ENCODE measurements at regions of chr10 and their contacts with region 1.

Region 1: DNA sequence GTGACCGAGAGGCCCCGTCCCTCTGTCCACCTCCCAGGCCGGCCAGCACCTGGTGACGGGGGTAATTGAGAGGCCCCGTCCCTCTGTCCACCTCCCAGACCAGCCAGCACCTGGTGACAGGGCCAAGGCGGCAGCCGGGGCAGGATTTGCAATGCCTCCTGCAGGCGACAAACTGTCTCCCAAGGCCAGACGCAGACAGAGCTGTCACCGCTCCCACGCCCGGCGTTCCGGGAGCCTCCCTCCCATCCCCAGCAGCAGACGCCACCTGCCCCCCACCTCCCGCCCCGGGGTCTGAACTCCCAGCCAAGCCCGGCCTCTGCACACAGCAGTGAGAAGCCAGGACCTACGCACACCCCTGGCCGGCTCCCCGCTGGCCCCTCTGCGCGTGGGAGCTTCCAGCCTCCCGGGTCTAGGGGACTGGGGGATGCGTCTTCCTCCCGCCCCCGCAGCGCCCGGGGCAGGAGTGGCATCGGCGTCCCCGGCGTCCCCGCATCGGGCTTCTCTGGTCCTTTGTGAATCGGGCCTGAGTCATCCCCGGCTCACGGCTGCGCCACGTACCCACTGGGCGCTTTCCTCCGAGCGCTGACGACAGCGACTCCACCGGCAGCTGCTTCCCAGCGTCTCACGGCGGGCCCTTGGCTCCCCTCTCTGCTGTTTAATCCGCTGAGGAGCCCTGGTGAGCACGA is 95.1 kb upstream of the DIP2C start:
- DNase-seq: peak; percentile 58
- ATAC-seq: peak; percentile 89
- H3K4me3 ChIP-seq: peak overlapping the region; percentile 35 to 54
- H3K27ac ChIP-seq: peak overlapping the region; percentile 15; the same call in 1 of the 2 replicates
- H3K4me1 ChIP-seq: peaks cover 6 to 15% of the 10 kb centered on the region in 2 experiments; a peak in 3 of 4 replicates
- H3K27me3 ChIP-seq: peaks cover 3% of the 10 kb centered on the region; the same call in 1 of the 2 replicates
- CTCF ChIP-seq: peak in 1 of 3 experiments; percentile 28; a peak in 1 of 6 replicates
- POLR2A ChIP-seq: no peak
- RAD21 ChIP-seq: peak; percentile 48

Region 2: DNA sequence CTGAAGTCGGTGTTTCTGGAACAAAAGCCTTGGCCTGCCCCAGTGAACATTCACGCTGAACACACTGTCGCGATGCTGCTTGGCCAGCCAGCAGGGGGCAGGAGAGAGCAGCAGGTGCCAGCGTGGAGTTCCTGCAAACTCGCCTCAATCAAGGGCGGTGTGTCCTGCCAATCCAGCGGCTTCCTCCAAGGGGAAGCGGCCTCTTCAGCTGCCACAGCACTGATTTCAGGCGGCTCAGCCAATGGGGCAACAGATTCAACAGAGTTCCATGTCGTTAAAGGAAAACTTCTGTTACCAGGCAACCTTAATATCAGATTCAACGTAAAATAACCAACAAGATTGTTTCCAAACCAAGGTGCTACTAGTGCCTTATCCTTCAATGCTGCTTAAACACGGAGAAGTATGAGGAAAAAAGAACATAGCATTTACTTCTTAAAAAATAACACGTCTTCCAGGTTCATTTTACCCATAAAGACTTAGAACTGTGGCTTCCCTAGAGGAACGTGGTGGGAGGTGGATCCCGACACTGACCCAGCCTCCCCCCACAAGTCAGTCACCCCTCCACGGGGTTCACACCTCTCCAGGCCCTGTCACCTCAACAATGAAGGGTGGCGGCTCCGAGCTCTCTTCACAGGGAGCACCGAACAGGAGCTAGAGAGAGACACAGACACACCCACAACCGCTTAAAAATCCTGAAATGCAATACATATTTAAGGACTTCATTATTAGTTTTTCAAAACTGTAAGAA is 273.3 kb before region 1 on chr10:
- CTCF ChIA-PET with region 1: no interaction called
- POLR2A ChIA-PET with region 1: no interaction called
- RAD21 ChIA-PET with region 1: no interaction called
- intact Hi-C with region 1: loop called (anchors 2 kb)
- DNase-seq: peak; percentile 83
- ATAC-seq: peak; percentile 97
- H3K4me3 ChIP-seq: no peak overlapping the region
- H3K27ac ChIP-seq: no peak overlapping the region
- H3K4me1 ChIP-seq: peaks cover 0 to 10% of the 10 kb centered on the region in 2 experiments; a peak in 2 of 4 replicates
- H3K27me3 ChIP-seq: no peaks in the 10 kb centered on the region
- CTCF ChIP-seq: peak; percentile 78 to 99 (median 98)
- POLR2A ChIP-seq: no peak
- RAD21 ChIP-seq: peak; percentile 90

Region 3: DNA sequence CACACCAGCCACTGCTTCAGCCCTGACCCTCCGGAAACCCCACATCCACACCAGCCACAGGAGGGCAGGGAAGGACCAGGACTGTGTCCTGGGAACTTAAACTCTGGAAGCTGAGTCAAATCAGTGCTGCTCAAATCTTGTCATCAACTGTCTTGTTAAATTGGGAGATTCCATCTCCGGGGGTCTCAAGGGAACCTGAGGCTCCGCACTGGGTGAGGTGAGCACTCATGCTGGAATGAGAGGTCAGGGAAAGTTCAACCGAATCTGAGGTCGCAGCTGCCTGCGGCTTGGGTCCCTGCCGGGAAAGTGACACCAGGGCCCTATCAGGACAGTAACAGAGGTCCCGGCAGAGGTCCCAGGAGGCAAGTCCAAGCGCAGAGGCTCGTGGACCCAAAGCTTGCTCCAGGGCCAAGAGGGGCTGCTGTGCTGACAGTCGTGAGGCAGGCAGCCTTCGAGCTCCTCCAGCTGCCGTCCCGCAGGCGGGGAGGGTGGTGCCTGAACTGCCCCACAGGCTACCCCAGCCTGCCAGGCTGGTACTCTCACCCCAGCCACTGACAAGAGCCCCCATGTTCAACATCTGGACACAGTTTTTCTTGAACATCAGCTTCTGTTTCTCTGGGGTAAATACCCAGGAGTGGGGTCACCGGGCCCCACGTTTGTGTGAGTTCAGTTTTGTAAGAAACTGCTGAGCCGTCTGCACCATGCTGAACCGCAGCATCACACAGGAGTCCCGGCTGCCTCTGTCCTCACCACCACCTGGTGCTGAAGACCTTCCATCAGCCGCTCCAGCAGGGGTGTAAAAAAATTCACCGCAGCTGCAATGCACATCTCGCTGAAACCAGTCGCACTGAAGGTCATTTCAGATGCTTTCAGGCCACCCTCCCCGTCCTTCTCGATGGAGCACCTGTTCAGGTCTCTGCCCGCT is 196.0 kb before region 1 on chr10:
- CTCF ChIA-PET with region 1: no interaction called
- POLR2A ChIA-PET with region 1: no interaction called
- RAD21 ChIA-PET with region 1: no interaction called
- intact Hi-C with region 1: loop called (anchors 10 kb)
- DNase-seq: no peak
- ATAC-seq: peak; percentile 78
- H3K4me3 ChIP-seq: no peak overlapping the region
- H3K27ac ChIP-seq: no peak overlapping the region
- H3K4me1 ChIP-seq: peaks cover 6 to 9% of the 10 kb centered on the region in 2 experiments; a peak in 3 of 4 replicates
- H3K27me3 ChIP-seq: no peaks in the 10 kb centered on the region
- CTCF ChIP-seq: no peak; a peak in 1 of 6 replicates
- POLR2A ChIP-seq: no peak
- RAD21 ChIP-seq: peak; percentile 41; the same call in 1 of the 2 replicates

Region 4: GRCh38 chr10:2094171-2094570 is 1309.6 kb after region 1 on chr10:
- CTCF ChIA-PET with region 1: no interaction called
- POLR2A ChIA-PET with region 1: no interaction called
- RAD21 ChIA-PET with region 1: no interaction called
- intact Hi-C with region 1: no loop called
- DNase-seq: no peak
- ATAC-seq: no peak
- H3K4me3 ChIP-seq: no peak overlapping the region
- H3K27ac ChIP-seq: no peak overlapping the region
- H3K4me1 ChIP-seq: no peaks in the 10 kb centered on the region
- H3K27me3 ChIP-seq: no peaks in the 10 kb centered on the region
- CTCF ChIP-seq: no peak
- POLR2A ChIP-seq: no peak
- RAD21 ChIP-seq: no peak

Measured in HCT116 (cell line).